Naive thymus-derived CD4-positive, alpha-beta T cell (primary cell): ENCODE measurements at regions of chr2 and their contacts with region 1.

Region 1: GRCh38 chr2:43226558-43226954 is at the start of gene ZFP36L2:
- DNase-seq: peak; percentile 90 to 99 (median 97)
- ATAC-seq: peak; percentile 84
- H3K4me3 ChIP-seq: peak within 1 kb of the TSS; percentile 87
- H3K4me3 Mint-ChIP-seq: peak within 1 kb of the TSS; percentile 85 to 99 (median 96)
- H3K27ac ChIP-seq: peak within 1 kb of the TSS; percentile 97
- H3K27ac Mint-ChIP-seq: peak within 1 kb of the TSS; percentile 87 to 99 (median 96)
- H3K4me1 ChIP-seq: peaks cover 22% of the 10 kb centered on the region in 2 donors
- H3K4me1 Mint-ChIP-seq: peaks cover 22 to 35% (median 25%) of the 10 kb centered on the region in 7 donors
- H3K27me3 ChIP-seq: no peaks in the 10 kb centered on the region
- H3K27me3 Mint-ChIP-seq: peaks cover 0 to 4% (median 0%) of the 10 kb centered on the region in 5 donors
- total RNA-seq, gene ZFP36L2: 231 to 747 (median 389) TPM

Region 2: GRCh38 chr2:41840702-41841551 is 1385.6 kb before region 1 on chr2:
- CTCF ChIA-PET with region 1: no interaction called
- POLR2A ChIA-PET with region 1: no interaction called
- intact Hi-C with region 1: loop called in 1 of 2 experiments (anchors 2 kb)
- DNase-seq: peak; percentile 93 to 98 (median 97)
- ATAC-seq: peak; percentile 99
- H3K4me3 ChIP-seq: peak overlapping the region; percentile 90
- H3K4me3 Mint-ChIP-seq: peak overlapping the region; percentile 90 to 99 (median 95)
- H3K27ac ChIP-seq: peak overlapping the region; percentile 83
- H3K27ac Mint-ChIP-seq: peak overlapping the region; percentile 84 to 99 (median 96)
- H3K4me1 ChIP-seq: peaks cover 0 to 5% of the 10 kb centered on the region in 2 donors
- H3K4me1 Mint-ChIP-seq: peaks cover 6 to 16% (median 10%) of the 10 kb centered on the region in 7 donors
- H3K27me3 ChIP-seq: no peaks in the 10 kb centered on the region
- H3K27me3 Mint-ChIP-seq: peaks cover 18 to 34% (median 24%) of the 10 kb centered on the region in 5 donors

Region 3: DNA sequence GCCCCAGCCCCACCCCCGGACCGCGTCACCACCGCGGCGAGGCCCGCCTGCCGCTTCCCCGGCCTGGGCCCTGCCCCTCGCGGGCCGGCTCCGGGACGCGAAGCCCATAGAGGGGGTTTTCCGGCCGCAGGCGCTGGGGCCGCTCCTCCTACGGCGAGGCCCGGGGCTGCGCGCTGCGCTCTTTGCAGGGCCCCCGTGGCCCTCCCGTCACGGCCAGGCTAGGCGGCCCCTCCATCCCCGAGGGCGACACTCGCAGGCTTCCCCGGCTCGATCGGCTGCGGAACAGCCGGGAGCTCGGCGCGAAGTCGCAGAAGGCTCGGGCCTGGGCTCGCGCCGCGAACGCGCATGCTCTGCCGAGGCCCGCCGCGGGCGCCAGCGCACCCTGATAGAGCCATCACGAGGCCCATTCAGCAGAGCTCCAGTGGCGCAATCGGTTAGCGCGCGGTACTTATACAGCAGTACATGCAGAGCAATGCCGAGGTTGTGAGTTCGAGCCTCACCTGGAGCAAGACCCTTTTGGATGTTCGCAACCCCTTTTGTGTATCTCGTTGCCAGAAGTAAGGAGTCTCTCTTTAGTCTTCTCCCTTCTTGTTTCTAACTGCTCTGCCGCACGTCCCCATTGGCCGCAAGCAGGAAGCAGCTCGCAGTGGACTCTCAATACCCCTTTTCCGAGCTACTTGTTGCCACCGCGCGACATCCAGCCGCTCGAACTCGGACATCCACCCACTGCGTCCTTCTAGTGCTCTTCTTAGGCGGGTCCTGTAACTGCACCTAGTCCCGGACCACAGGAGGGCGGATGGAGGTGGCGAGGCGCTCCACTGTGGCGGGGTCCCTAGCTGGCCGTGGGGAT is 416.2 kb before region 1 on chr2:
- CTCF ChIA-PET with region 1: no interaction called
- POLR2A ChIA-PET with region 1: interaction called, 11 read pairs
- intact Hi-C with region 1: loop called in 1 of 2 experiments (anchors 1 kb)
- DNase-seq: peak; percentile 96 to 99 (median 98)
- ATAC-seq: peak; percentile 90
- H3K4me3 ChIP-seq: peak overlapping the region; percentile 99
- H3K4me3 Mint-ChIP-seq: peak overlapping the region; percentile 90 to 99 (median 98)
- H3K27ac ChIP-seq: peak overlapping the region; percentile 99
- H3K27ac Mint-ChIP-seq: peak overlapping the region; percentile 93 to 100 (median 99)
- H3K4me1 ChIP-seq: peaks cover 0 to 3% of the 10 kb centered on the region in 2 donors
- H3K4me1 Mint-ChIP-seq: peaks cover 0 to 35% (median 20%) of the 10 kb centered on the region in 7 donors
- H3K27me3 ChIP-seq: no peaks in the 10 kb centered on the region
- H3K27me3 Mint-ChIP-seq: peaks cover 0 to 28% (median 0%) of the 10 kb centered on the region in 5 donors

Region 4: DNA sequence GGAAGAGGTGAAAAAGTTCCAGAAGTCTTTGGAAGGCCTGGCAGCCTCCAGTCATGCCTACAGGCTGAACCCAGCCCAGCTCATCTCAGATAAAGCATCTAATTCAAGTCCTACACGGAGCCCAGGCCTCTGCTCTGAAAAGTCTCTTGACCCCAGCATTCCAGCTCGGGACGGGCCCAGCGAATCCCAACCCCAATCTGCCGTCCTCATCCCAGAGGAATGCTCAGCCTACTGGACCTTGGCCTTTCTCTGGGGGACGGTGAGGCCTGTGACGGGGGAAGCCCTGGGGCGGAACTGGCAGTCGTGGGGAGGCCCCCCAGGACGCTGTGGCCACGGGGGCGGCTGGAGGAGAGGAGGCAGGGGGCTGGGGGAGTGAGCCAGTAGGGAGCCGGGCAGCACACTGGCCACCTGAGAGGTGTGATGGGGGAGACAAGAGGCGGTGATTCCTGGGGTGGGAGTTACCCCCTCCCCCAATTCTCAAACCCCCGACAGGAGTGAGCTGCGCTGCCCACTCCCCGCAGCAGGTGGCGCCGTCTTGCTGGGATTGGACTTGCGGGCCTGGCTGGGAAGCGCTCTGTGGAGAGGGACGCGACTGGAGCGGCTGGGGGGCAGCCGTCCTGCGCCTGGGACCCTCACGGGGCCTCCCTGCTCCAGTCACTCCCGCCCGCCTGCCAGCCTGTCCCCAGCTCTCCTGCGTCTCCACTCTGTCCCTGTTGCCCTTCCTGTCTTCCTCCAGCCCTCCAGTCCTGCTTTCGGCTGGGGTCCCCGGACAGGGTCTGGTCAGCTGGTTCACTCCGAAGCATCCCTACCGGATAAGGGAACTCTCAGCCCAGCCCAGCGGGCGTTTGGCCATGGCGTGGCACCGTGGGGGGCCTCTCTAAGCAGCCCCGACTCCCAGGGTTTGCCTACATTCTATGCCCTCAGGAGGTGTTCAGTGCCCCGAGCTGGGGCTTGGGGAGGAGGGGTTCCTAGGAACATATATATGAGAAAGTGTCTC is 251.5 kb before region 1 on chr2:
- CTCF ChIA-PET with region 1: interaction called, 48 read pairs
- POLR2A ChIA-PET with region 1: interaction called, 12 read pairs
- intact Hi-C with region 1: loop called in 1 of 2 experiments (anchors 1 kb)
- DNase-seq: peak; percentile 25 to 64 (median 47)
- ATAC-seq: peak; percentile 70
- H3K4me3 ChIP-seq: no peak overlapping the region
- H3K4me3 Mint-ChIP-seq: no peak overlapping the region
- H3K27ac ChIP-seq: no peak overlapping the region
- H3K27ac Mint-ChIP-seq: peak overlapping the region in 3 of 9 donors; percentile 25 to 74 (median 41)
- H3K4me1 ChIP-seq: peaks cover 0 to 6% of the 10 kb centered on the region in 2 donors
- H3K4me1 Mint-ChIP-seq: peaks cover 12 to 19% (median 16%) of the 10 kb centered on the region in 7 donors
- H3K27me3 ChIP-seq: no peaks in the 10 kb centered on the region
- H3K27me3 Mint-ChIP-seq: peaks cover 0 to 10% (median 0%) of the 10 kb centered on the region in 5 donors

Region 5: GRCh38 chr2:43139996-43140621 is 86.4 kb before region 1 on chr2:
- CTCF ChIA-PET with region 1: interaction called, 203 read pairs
- POLR2A ChIA-PET with region 1: interaction called, 1,899 read pairs
- intact Hi-C with region 1: no loop called
- DNase-seq: peak in 1 of 9 donors; percentile 39
- ATAC-seq: peak; percentile 17
- H3K4me3 ChIP-seq: peak overlapping the region; percentile 6
- H3K4me3 Mint-ChIP-seq: peak overlapping the region; percentile 41 to 86 (median 62)
- H3K27ac ChIP-seq: peak overlapping the region; percentile 96
- H3K27ac Mint-ChIP-seq: peak overlapping the region; percentile 82 to 100 (median 96)
- H3K4me1 ChIP-seq: peaks cover 61 to 83% of the 10 kb centered on the region in 2 donors
- H3K4me1 Mint-ChIP-seq: peaks cover 65 to 95% (median 78%) of the 10 kb centered on the region in 7 donors
- H3K27me3 ChIP-seq: no peaks in the 10 kb centered on the region
- H3K27me3 Mint-ChIP-seq: no peaks in the 10 kb centered on the region

Region 6: DNA sequence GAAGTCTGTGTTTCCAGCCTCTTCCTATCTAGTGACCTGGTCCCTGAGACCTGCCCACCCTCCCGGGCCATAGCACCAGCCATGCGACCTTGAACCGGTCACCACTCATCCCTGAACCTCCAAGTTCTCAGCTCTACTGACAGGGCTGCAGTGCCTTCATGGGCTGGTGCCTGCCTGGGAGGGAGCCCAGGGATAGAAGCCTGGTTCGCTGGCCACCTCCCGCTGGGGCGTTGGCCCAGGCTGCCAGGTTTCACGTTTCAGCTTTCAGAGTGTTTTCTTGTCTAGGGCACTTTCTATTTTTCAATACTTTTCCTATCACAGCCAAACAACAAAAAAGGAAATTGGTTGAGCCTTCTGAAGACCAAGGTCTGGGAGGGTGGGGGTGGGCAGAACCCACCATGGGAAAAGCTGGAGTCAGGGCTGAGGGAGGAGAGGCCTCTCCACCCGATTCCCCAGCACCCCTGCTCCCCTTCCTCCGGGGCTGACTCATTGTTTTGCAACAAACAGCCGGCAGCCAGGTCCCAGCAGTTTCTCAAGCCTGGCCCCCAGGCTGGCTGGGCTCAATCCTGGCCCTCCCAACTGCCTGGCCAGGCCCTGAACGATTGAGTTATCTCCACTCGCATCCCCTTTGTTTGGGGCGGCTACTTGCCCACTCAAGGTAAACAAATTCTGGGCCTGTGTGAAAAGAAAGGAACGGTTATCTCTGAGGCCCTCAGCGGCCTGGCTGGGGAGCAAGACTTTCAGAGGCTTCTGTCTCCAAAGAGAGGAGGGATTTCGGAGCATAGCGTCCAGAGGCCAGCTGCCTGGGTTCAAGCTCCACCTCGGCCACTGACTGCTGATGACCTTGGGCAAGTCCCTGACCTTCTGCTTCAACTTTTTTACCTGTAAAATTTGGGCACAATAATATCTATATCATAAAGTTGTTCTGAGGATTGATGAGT is 47.7 kb before region 1 on chr2:
- CTCF ChIA-PET with region 1: interaction called, 210 read pairs
- POLR2A ChIA-PET with region 1: interaction called, 1,899 read pairs
- intact Hi-C with region 1: loop called (anchors 1 kb)
- DNase-seq: peak in 1 of 9 donors; percentile 30
- ATAC-seq: no peak
- H3K4me3 ChIP-seq: peak overlapping the region; percentile 17
- H3K4me3 Mint-ChIP-seq: peak overlapping the region; percentile 53 to 79 (median 71)
- H3K27ac ChIP-seq: peak overlapping the region; percentile 66
- H3K27ac Mint-ChIP-seq: peak overlapping the region; percentile 94 to 99 (median 97)
- H3K4me1 ChIP-seq: peaks cover 49 to 70% of the 10 kb centered on the region in 2 donors
- H3K4me1 Mint-ChIP-seq: peaks cover 52 to 78% (median 75%) of the 10 kb centered on the region in 7 donors
- H3K27me3 ChIP-seq: no peaks in the 10 kb centered on the region
- H3K27me3 Mint-ChIP-seq: no peaks in the 10 kb centered on the region

Region 7: GRCh38 chr2:43542285-43542937 is 315.9 kb after region 1 on chr2:
- CTCF ChIA-PET with region 1: interaction called, 5 read pairs
- POLR2A ChIA-PET with region 1: interaction called, 3 read pairs
- intact Hi-C with region 1: loop called (anchors 1 to 2 kb)
- DNase-seq: peak in 7 of 9 donors; percentile 43 to 70 (median 48)
- ATAC-seq: peak; percentile 82
- H3K4me3 ChIP-seq: no peak overlapping the region
- H3K4me3 Mint-ChIP-seq: no peak overlapping the region
- H3K27ac ChIP-seq: no peak overlapping the region
- H3K27ac Mint-ChIP-seq: no peak overlapping the region
- H3K4me1 ChIP-seq: peaks cover 0 to 3% of the 10 kb centered on the region in 2 donors
- H3K4me1 Mint-ChIP-seq: peaks cover 9 to 18% (median 15%) of the 10 kb centered on the region in 7 donors
- H3K27me3 ChIP-seq: no peaks in the 10 kb centered on the region
- H3K27me3 Mint-ChIP-seq: no peaks in the 10 kb centered on the region